ENCODE measurements at regions of chr3 and their contacts with region 1.

Region 1: DNA sequence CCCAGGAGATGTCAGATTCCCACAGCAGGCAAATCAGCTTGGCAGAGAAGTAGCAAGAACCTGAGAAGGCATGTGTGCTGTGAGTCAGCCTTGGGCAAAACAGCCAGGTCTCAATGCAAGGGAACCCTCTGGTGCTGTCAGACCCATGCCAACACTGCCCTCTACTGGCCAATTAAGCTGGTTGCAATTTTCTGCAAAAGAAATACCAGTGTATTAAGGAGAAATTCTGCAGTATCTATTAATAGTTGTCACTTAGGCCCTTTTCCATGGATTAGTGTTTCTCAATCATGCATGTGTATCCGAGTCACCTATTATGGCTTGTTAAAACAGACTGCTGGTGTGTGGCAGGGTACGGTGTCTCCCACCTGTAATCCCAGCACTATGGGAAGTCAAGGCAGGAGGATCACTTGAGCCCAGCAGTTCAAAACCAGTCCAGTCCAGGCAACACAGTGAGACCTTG is 26.2 kb downstream of the MAP4 start:
- DNase-seq: peak; percentile 95
- H3K4me3 Mint-ChIP-seq: no peak overlapping the region
- H3K27ac Mint-ChIP-seq: peak overlapping the region; percentile 69
- H3K4me1 Mint-ChIP-seq: peaks cover 18% of the 10 kb centered on the region
- H3K27me3 Mint-ChIP-seq: no peaks in the 10 kb centered on the region
- CTCF ChIP-seq: peak; percentile 82

Region 2: GRCh38 chr3:47836986-47837385 is 153.0 kb before region 1 on chr3:
- CTCF ChIA-PET with region 1: interaction called, 4 read pairs
- POLR2A ChIA-PET with region 1: interaction called, 4 read pairs
- intact Hi-C with region 1: loop called (anchors 1 kb)
- DNase-seq: no peak
- H3K4me3 Mint-ChIP-seq: no peak overlapping the region
- H3K27ac Mint-ChIP-seq: no peak overlapping the region
- H3K4me1 Mint-ChIP-seq: no peaks in the 10 kb centered on the region
- H3K27me3 Mint-ChIP-seq: no peaks in the 10 kb centered on the region
- CTCF ChIP-seq: no peak

Region 3: GRCh38 chr3:48001991-48002390 is 12.0 kb after region 1 on chr3:
- CTCF ChIA-PET with region 1: interaction called, 32 read pairs
- POLR2A ChIA-PET with region 1: interaction called, 4 read pairs
- intact Hi-C with region 1: no loop called
- DNase-seq: no peak
- H3K4me3 Mint-ChIP-seq: no peak overlapping the region
- H3K27ac Mint-ChIP-seq: no peak overlapping the region
- H3K4me1 Mint-ChIP-seq: peaks cover 1% of the 10 kb centered on the region
- H3K27me3 Mint-ChIP-seq: no peaks in the 10 kb centered on the region
- CTCF ChIP-seq: no peak

Region 4: GRCh38 chr3:48222616-48223513 is 232.9 kb after region 1 on chr3 and contains the start of gene CAMP:
- CTCF ChIA-PET with region 1: no interaction called
- POLR2A ChIA-PET with region 1: no interaction called
- intact Hi-C with region 1: no loop called
- DNase-seq: peak; percentile 98
- H3K4me3 Mint-ChIP-seq: no peak within 1 kb of the TSS
- H3K27ac Mint-ChIP-seq: peak within 1 kb of the TSS; percentile 31
- H3K4me1 Mint-ChIP-seq: peaks cover 14% of the 10 kb centered on the region
- H3K27me3 Mint-ChIP-seq: no peaks in the 10 kb centered on the region
- CTCF ChIP-seq: no peak
- total RNA-seq, gene CAMP: 0.72 and 2.4 TPM in 2 replicates

Region 5: GRCh38 chr3:48535578-48535977 is 545.6 kb after region 1 on chr3:
- CTCF ChIA-PET with region 1: no interaction called
- POLR2A ChIA-PET with region 1: no interaction called
- intact Hi-C with region 1: no loop called
- DNase-seq: peak; percentile 59
- H3K4me3 Mint-ChIP-seq: no peak overlapping the region
- H3K27ac Mint-ChIP-seq: peak overlapping the region; percentile 61
- H3K4me1 Mint-ChIP-seq: no peaks in the 10 kb centered on the region
- H3K27me3 Mint-ChIP-seq: no peaks in the 10 kb centered on the region
- CTCF ChIP-seq: no peak

Region 6: DNA sequence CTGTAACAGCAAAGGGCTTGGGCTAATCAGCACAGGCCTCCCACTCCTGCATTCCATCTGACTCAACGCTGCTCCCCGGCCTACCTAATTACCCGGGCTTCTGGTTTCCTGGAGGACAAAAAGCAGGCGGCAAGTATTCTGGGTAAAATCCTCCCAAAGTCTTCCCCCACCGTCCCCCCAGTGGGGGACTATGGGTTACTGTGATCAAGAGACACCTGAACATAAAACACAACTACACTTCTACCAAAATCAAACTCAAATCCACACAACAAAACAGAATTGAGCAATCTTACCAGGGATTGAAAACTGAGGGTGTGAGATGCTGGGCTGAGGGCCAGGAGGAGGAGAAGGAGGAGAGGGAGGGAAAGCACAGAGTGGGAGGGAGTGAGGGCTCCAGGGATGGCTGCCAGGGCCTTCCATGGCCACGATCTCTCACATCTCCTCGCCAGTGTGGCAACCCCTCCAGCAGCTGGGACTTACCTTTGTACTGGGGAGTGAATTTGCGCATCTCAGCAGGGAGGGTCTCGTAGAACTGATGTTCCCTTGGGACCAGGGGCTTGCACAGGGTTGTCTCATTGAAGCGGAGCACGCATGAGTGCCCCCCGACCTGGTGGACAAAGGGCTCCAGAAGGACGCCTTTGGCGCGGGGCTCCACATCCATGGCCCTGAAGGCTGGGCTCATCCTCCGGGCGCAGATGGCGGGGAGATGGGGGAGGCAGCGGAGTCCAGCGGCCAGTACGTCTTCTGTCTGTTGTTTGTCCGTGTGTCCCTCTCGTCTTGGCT is 704.8 kb after region 1 on chr3:
- CTCF ChIA-PET with region 1: no interaction called
- POLR2A ChIA-PET with region 1: no interaction called
- intact Hi-C with region 1: no loop called
- DNase-seq: peak; percentile 97
- H3K4me3 Mint-ChIP-seq: peak overlapping the region; percentile 85
- H3K27ac Mint-ChIP-seq: peak overlapping the region; percentile 89
- H3K4me1 Mint-ChIP-seq: peaks cover 27% of the 10 kb centered on the region
- H3K27me3 Mint-ChIP-seq: no peaks in the 10 kb centered on the region
- CTCF ChIP-seq: no peak

Measured in MCF 10A (cell line).